ENCODE measurements at regions of chr7 and their contacts with region 1.

Region 1: GRCh38 chr7:7968543-7969305 is at the start of gene GLCCI1:
- DNase-seq: peak; percentile 96 to 98 (median 97)
- ATAC-seq: peak; percentile 99
- H3K4me3 ChIP-seq: peak within 1 kb of the TSS; percentile 66 to 99 (median 91)
- H3K27ac ChIP-seq: peak within 1 kb of the TSS; percentile 69 to 98 (median 94)
- H3K4me1 ChIP-seq: peaks cover 0 to 26% (median 12%) of the 10 kb centered on the region in 12 donors
- H3K27me3 ChIP-seq: no peaks in the 10 kb centered on the region
- CTCF ChIP-seq: no peak
- POLR2A ChIP-seq: peak in 1 of 2 donors; percentile 94
- total RNA-seq, gene GLCCI1: 2.4 to 10.8 (median 7.7) TPM

Region 2: GRCh38 chr7:7265081-7265686 is 703.5 kb before region 1 on chr7:
- intact Hi-C with region 1: no loop called
- DNase-seq: no peak
- ATAC-seq: peak in 1 of 4 donors; percentile 18
- H3K4me3 ChIP-seq: no peak overlapping the region
- H3K27ac ChIP-seq: no peak overlapping the region
- H3K4me1 ChIP-seq: peaks cover 0 to 16% (median 0%) of the 10 kb centered on the region in 12 donors
- H3K27me3 ChIP-seq: no peaks in the 10 kb centered on the region
- CTCF ChIP-seq: no peak
- POLR2A ChIP-seq: no peak

Region 3: GRCh38 chr7:7640221-7641128 is 328.2 kb before region 1 on chr7 and contains the start of gene UMAD1:
- intact Hi-C with region 1: loop called in 3 of 10 experiments (anchors 2 to 10 kb)
- DNase-seq: peak; percentile 97 to 99 (median 98)
- ATAC-seq: peak; percentile 100
- H3K4me3 ChIP-seq: peak within 1 kb of the TSS; percentile 65 to 91 (median 83)
- H3K27ac ChIP-seq: peak within 1 kb of the TSS; percentile 4 to 93 (median 85)
- H3K4me1 ChIP-seq: peaks cover 0 to 22% (median 16%) of the 10 kb centered on the region in 12 donors
- H3K27me3 ChIP-seq: no peaks in the 10 kb centered on the region
- CTCF ChIP-seq: no peak
- POLR2A ChIP-seq: peak in 1 of 2 donors; percentile 65
- total RNA-seq, gene UMAD1: 10.1 to 19.7 (median 15.6) TPM

Region 4: GRCh38 chr7:7686811-7687508 is 281.8 kb before region 1 on chr7:
- intact Hi-C with region 1: loop called in 3 of 10 experiments (anchors 5 to 10 kb)
- DNase-seq: no peak
- ATAC-seq: peak in 1 of 4 donors; percentile 8
- H3K4me3 ChIP-seq: peak overlapping the region in 1 of 12 donors; percentile 0
- H3K27ac ChIP-seq: peak overlapping the region in 11 of 12 donors; percentile 39 to 81 (median 71)
- H3K4me1 ChIP-seq: peaks cover 0 to 43% (median 29%) of the 10 kb centered on the region in 12 donors
- H3K27me3 ChIP-seq: no peaks in the 10 kb centered on the region
- CTCF ChIP-seq: no peak
- POLR2A ChIP-seq: no peak

Region 5: DNA sequence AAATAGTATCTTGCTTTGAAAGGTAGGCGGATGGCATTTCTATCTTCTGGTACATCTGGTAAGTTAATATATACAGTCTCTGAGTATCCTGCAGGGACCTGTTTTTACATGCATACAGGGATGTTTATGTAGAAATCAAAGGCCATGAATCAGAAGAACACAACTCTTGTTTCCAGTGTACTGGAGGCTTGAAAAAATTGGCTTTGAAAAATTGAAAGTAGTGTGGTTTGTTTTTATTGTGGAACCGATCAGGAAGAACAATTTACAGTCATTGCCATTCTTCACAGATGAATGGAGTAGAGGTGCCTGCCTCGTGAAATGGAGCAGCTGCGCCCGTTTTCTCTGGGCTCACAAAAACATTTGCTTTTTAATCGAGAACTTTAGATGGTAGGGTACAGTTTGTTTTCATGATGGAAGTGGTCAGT is 196.3 kb before region 1 on chr7:
- intact Hi-C with region 1: loop called in 3 of 10 experiments (anchors 10 kb)
- DNase-seq: no peak
- ATAC-seq: no peak
- H3K4me3 ChIP-seq: no peak overlapping the region
- H3K27ac ChIP-seq: no peak overlapping the region
- H3K4me1 ChIP-seq: peaks cover 0 to 5% (median 0%) of the 10 kb centered on the region in 12 donors
- H3K27me3 ChIP-seq: no peaks in the 10 kb centered on the region
- CTCF ChIP-seq: no peak
- POLR2A ChIP-seq: no peak

Region 6: GRCh38 chr7:8564281-8564680 is 595.6 kb after region 1 on chr7:
- intact Hi-C with region 1: no loop called
- DNase-seq: no peak
- ATAC-seq: no peak
- H3K4me3 ChIP-seq: no peak overlapping the region
- H3K27ac ChIP-seq: no peak overlapping the region
- H3K4me1 ChIP-seq: no peaks in the 10 kb centered on the region
- H3K27me3 ChIP-seq: peaks cover 0 to 4% (median 0%) of the 10 kb centered on the region in 9 donors
- CTCF ChIP-seq: no peak
- POLR2A ChIP-seq: no peak